ENCODE measurements at regions of chr6 and their contacts with region 1.

Region 1: DNA sequence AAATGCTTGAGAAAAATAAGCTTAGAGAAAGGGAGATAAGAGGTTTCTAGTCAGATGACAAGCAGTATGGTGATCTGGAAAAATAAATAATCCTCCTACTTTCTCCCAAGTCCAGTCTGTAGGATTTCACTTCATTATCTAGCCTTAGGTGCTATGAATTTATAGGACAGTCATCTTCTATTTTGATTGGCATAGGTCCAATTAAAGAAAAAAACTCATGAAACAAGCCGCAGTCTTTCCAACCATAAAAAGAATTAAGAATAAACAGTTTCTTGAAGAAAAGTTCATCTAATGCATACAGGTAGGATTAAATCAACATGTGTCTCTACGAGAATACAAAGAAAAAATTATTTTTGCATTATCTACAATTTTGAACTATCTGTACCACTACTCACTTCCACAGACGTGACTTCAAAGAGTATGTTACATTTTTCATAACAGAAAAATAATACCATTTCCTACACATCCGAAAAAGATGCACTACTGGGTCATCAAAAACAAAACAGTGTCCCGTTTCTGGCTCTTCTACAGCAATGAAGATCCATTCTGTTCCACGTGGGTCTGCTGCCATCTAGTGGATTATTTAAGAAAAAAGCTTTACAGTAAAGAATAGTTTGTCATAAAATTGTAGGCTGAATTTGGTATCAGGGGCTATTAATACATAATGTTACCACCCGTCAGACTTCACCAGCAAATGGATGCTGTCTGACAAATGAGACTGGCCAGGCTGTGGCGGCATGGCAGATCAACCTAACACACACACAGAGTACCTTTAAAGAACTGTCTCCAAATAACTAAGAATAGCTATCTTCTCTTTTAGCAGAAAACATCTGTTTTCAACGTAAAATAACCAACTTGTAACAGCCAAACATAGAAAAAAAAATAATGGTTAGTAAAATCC is 28.9 kb downstream of the STX7 start:
- DNase-seq: peak; percentile 55
- ATAC-seq: peak; percentile 55
- H3K4me3 Mint-ChIP-seq: no peak overlapping the region
- H3K27ac Mint-ChIP-seq: no peak overlapping the region
- H3K4me1 Mint-ChIP-seq: peaks cover 22% of the 10 kb centered on the region
- H3K27me3 Mint-ChIP-seq: no peaks in the 10 kb centered on the region

Region 2: GRCh38 chr6:131923356-131923755 is 560.7 kb before region 1 on chr6:
- CTCF ChIA-PET with region 1: no interaction called
- POLR2A ChIA-PET with region 1: no interaction called
- intact Hi-C with region 1: loop called (anchors 5 to 10 kb)
- DNase-seq: peak; percentile 70
- ATAC-seq: peak; percentile 44
- H3K4me3 Mint-ChIP-seq: no peak overlapping the region
- H3K27ac Mint-ChIP-seq: no peak overlapping the region
- H3K4me1 Mint-ChIP-seq: no peaks in the 10 kb centered on the region
- H3K27me3 Mint-ChIP-seq: peaks cover 10% of the 10 kb centered on the region

Region 3: DNA sequence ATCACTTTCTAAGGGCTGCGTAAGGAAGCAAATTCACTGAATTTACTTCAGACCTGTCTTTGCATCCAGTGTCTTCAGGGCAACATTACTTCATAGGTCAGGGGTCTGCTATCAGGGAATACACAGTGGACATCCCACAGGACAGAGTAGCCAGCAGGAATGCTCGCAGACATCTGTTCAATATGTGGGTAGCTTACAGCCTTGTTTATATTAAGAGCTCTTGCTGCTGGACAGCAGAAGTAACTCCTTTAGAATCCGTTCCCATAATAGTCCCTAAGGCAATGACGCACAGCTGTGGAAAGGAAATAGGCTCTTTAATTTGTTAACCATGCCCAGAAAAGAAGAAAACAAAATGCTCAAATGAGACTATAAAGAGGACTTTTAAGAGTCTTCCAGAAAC is 281.5 kb before region 1 on chr6:
- CTCF ChIA-PET with region 1: no interaction called
- POLR2A ChIA-PET with region 1: no interaction called
- intact Hi-C with region 1: no loop called
- DNase-seq: no peak
- ATAC-seq: no peak
- H3K4me3 Mint-ChIP-seq: no peak overlapping the region
- H3K27ac Mint-ChIP-seq: no peak overlapping the region
- H3K4me1 Mint-ChIP-seq: no peaks in the 10 kb centered on the region
- H3K27me3 Mint-ChIP-seq: no peaks in the 10 kb centered on the region

Region 4: GRCh38 chr6:132300323-132300949 is 183.6 kb before region 1 on chr6:
- CTCF ChIA-PET with region 1: interaction called, 100 read pairs
- POLR2A ChIA-PET with region 1: no interaction called
- intact Hi-C with region 1: loop called (anchors 1 kb)
- DNase-seq: peak; percentile 46
- ATAC-seq: peak; percentile 79
- H3K4me3 Mint-ChIP-seq: no peak overlapping the region
- H3K27ac Mint-ChIP-seq: no peak overlapping the region
- H3K4me1 Mint-ChIP-seq: no peaks in the 10 kb centered on the region
- H3K27me3 Mint-ChIP-seq: peaks cover 11% of the 10 kb centered on the region

Region 5: GRCh38 chr6:132465530-132466485 is 18.2 kb before region 1 on chr6:
- CTCF ChIA-PET with region 1: interaction called, 8 read pairs
- POLR2A ChIA-PET with region 1: no interaction called
- intact Hi-C with region 1: loop called in 1 of 2 experiments (anchors 2 kb)
- DNase-seq: no peak
- ATAC-seq: peak; percentile 80
- H3K4me3 Mint-ChIP-seq: no peak overlapping the region
- H3K27ac Mint-ChIP-seq: no peak overlapping the region
- H3K4me1 Mint-ChIP-seq: no peaks in the 10 kb centered on the region
- H3K27me3 Mint-ChIP-seq: no peaks in the 10 kb centered on the region